Tibial artery (tissue), 4 donors: ENCODE measurements at regions of chr2 and their contacts with region 1.

Region 1: GRCh38 chr2:152456262-152456661 is 121.3 kb downstream of the FMNL2 start:
- DNase-seq: no peak
- H3K4me3 ChIP-seq: no peak overlapping the region
- H3K27ac ChIP-seq: no peak overlapping the region
- H3K4me1 ChIP-seq: peaks cover 0 to 40% (median 0%) of the 10 kb centered on the region in 4 donors
- H3K27me3 ChIP-seq: no peaks in the 10 kb centered on the region
- CTCF ChIP-seq: no peak

Region 2: DNA sequence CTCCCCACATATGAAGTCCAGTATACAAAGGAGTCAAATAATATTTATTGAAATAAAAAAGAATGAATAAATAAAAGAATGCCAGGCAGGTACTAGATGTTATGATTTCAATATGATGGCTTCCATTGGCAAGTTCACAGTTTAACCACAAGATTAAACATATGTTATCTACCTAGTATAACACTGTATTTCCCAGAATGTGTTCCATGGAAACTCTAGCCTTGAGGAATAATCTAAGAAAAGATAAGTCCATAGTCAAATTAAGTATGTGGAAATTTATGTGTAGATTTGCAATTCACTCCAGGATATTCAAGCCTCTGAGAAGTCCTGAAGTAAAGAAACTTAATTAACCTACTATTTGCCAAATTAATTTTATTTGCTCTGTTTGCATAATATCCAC is 192.4 kb before region 1 on chr2:
- intact Hi-C with region 1: no loop called
- DNase-seq: no peak
- H3K4me3 ChIP-seq: no peak overlapping the region
- H3K27ac ChIP-seq: no peak overlapping the region
- H3K4me1 ChIP-seq: no peaks in the 10 kb centered on the region
- H3K27me3 ChIP-seq: no peaks in the 10 kb centered on the region
- CTCF ChIP-seq: no peak

Region 3: GRCh38 chr2:152440049-152440448 is 16.2 kb before region 1 on chr2:
- intact Hi-C with region 1: loop called (anchors 1 kb)
- DNase-seq: no peak
- H3K4me3 ChIP-seq: no peak overlapping the region
- H3K27ac ChIP-seq: no peak overlapping the region
- H3K4me1 ChIP-seq: peaks cover 0 to 47% (median 8%) of the 10 kb centered on the region in 4 donors
- H3K27me3 ChIP-seq: no peaks in the 10 kb centered on the region
- CTCF ChIP-seq: no peak